Naive thymus-derived CD4-positive, alpha-beta T cell (primary cell): ENCODE measurements at regions of chr19 and their contacts with region 1.

Region 1: GRCh38 chr19:40285353-40286234 is 449 bp upstream of the AKT2 start:
- DNase-seq: peak; percentile 84 to 100 (median 99)
- ATAC-seq: peak; percentile 89
- H3K4me3 ChIP-seq: peak overlapping the region; percentile 81
- H3K4me3 Mint-ChIP-seq: peak overlapping the region; percentile 84 to 97 (median 92)
- H3K27ac ChIP-seq: peak overlapping the region; percentile 97
- H3K27ac Mint-ChIP-seq: peak overlapping the region; percentile 96 to 100 (median 99)
- H3K4me1 ChIP-seq: peaks cover 13 to 38% of the 10 kb centered on the region in 2 donors
- H3K4me1 Mint-ChIP-seq: peaks cover 24 to 59% (median 49%) of the 10 kb centered on the region in 7 donors
- H3K27me3 ChIP-seq: no peaks in the 10 kb centered on the region
- H3K27me3 Mint-ChIP-seq: peaks cover 0 to 2% (median 0%) of the 10 kb centered on the region in 5 donors

Region 2: DNA sequence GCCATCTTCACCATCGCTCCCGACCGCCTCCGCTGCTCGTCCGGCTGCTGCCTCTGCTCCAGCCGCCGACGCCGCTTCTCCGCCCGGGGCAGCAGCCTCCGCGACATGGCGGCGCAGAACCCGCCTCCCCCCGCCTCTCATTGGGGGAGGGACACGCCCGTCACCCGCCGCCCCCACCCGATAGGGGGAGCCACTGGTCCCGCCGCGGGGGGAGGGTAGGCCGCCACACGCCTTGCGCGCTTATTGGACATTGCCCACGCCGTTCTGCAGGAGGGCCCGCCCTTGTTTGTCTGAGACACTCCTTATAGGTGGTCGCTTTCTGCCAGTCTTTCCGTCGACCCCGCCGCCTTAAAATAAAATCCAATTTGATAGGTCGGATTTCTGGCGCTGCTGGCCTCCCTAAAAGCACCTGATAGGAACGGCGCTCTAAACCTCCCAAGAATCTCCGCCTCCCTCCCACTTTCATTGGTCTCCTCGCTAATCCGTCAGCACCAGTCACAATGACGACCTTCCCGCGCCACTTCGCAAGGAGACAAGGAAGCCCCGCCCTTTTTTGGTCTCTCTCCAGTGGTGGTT is 1435.6 kb before region 1 on chr19 and contains the start of gene HNRNPL:
- CTCF ChIA-PET with region 1: no interaction called
- POLR2A ChIA-PET with region 1: no interaction called
- intact Hi-C with region 1: loop called in 1 of 2 experiments (anchors 5 kb)
- DNase-seq: peak; percentile 99 to 100 (median 100)
- ATAC-seq: peak; percentile 78
- H3K4me3 ChIP-seq: peak within 1 kb of the TSS; percentile 81
- H3K4me3 Mint-ChIP-seq: peak within 1 kb of the TSS; percentile 88 to 99 (median 96)
- H3K27ac ChIP-seq: peak within 1 kb of the TSS; percentile 96
- H3K27ac Mint-ChIP-seq: peak within 1 kb of the TSS; percentile 94 to 100 (median 99)
- H3K4me1 ChIP-seq: peaks cover 24 to 41% of the 10 kb centered on the region in 2 donors
- H3K4me1 Mint-ChIP-seq: peaks cover 30 to 67% (median 50%) of the 10 kb centered on the region in 7 donors
- H3K27me3 ChIP-seq: no peaks in the 10 kb centered on the region
- H3K27me3 Mint-ChIP-seq: peaks cover 0 to 5% (median 0%) of the 10 kb centered on the region in 5 donors
- total RNA-seq, gene HNRNPL: 339 to 539 (median 505) TPM

Region 3: DNA sequence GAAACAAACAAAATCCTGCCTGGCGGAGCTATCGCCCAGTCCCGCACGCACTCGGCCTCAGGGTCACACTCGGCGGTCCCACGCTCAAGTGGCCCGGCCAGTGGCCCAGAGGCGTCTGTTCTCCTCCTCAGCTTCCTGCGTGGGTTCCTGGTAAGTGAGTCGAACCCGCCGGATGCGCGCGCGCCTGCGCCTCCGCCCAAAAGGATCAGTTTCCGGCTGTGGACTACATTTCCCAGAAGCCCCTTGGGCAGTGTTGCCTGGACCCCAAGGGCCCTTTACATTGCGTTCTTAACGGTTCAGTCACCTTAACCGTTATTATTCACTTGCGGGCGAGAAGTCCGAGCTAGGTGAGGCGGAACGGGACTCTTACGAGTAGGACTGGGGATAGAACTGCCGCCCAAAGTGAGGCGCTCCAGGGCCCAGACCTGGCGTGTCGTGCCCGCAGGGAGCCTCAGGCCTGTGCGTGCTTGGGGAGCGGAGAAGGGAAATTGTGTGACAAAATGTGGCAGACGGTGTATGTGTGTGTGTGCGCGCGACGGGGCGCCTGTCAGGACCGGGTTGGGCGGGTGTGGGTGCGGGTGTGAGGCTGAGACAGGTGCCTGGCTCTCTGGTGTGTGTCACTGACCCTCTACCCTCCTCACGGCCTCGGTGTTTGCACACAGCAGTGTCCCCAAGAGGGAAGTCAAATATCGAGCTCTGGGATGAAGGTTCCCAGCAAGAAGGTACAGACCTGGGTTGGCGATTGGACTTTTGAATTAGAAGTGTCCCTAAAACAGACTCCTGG is 288.6 kb before region 1 on chr19 and contains the start of gene ZNF546:
- CTCF ChIA-PET with region 1: no interaction called
- POLR2A ChIA-PET with region 1: no interaction called
- intact Hi-C with region 1: loop called in 1 of 2 experiments (anchors 2 kb)
- DNase-seq: peak; percentile 67 to 91 (median 90)
- ATAC-seq: peak; percentile 96
- H3K4me3 ChIP-seq: peak within 1 kb of the TSS; percentile 91
- H3K4me3 Mint-ChIP-seq: peak within 1 kb of the TSS; percentile 87 to 100 (median 95)
- H3K27ac ChIP-seq: peak within 1 kb of the TSS; percentile 85
- H3K27ac Mint-ChIP-seq: peak within 1 kb of the TSS; percentile 84 to 100 (median 95)
- H3K4me1 ChIP-seq: peaks cover 10 to 13% of the 10 kb centered on the region in 2 donors
- H3K4me1 Mint-ChIP-seq: peaks cover 20 to 56% (median 41%) of the 10 kb centered on the region in 7 donors
- H3K27me3 ChIP-seq: no peaks in the 10 kb centered on the region
- H3K27me3 Mint-ChIP-seq: no peaks in the 10 kb centered on the region
- total RNA-seq, gene ZNF546: 4.7 to 24.8 (median 7.5) TPM

Region 4: DNA sequence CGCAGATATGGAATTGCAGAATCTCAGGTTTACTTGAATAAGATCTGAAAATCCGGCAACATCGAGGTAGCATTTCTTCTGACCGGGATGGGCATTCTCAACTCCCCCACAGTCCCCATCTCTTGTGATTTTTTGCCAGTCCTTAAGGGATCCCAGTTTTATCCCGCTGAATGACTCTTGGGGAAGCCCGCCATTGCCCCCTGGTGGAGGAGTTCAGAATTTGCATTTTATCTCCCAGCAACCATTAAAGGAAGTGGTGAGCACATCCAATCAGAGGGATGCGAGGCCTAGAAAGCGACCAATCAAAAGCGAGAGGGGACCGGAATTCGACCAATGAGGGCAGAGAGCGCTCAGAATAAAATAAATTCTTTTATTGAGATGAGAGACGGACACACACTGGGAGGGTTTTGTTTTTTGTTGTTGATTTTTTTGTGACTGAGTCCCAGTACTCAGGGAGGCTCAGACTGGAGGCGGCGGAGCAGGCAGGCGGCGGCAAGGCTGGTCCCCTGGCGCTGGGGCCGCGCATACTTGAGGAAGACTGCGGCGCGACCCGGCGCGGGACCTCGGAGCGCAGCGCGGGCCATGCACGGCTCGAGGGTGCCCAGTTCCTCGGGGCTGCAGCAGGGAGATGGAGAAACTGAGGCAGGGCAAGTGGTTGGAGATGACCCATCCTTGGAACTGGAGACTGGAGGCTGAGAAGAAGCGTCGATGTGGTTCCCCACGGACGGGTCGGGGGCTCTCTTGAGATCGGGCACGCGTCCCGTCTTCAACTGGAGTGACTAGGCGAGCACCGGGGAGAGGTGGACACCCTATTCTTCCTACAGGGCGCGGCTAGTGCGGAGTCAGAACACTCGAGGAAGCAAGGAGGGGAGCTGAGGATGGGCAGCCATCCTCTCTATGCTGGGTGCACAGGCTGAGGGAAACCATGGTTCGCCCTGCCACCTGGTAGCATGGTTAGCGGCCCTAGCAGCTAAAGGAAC is 63.4 kb before region 1 on chr19:
- CTCF ChIA-PET with region 1: interaction called, 3 read pairs
- POLR2A ChIA-PET with region 1: no interaction called
- intact Hi-C with region 1: loop called in 1 of 2 experiments (anchors 2 kb)
- DNase-seq: peak; percentile 54 to 86 (median 82)
- ATAC-seq: peak; percentile 92
- H3K4me3 ChIP-seq: no peak overlapping the region
- H3K4me3 Mint-ChIP-seq: peak overlapping the region; percentile 16 to 85 (median 68)
- H3K27ac ChIP-seq: no peak overlapping the region
- H3K27ac Mint-ChIP-seq: peak overlapping the region; percentile 5 to 85 (median 58)
- H3K4me1 ChIP-seq: peaks cover 4 to 20% of the 10 kb centered on the region in 2 donors
- H3K4me1 Mint-ChIP-seq: peaks cover 12 to 30% (median 24%) of the 10 kb centered on the region in 7 donors
- H3K27me3 ChIP-seq: peaks cover 16 to 35% of the 10 kb centered on the region in 2 donors
- H3K27me3 Mint-ChIP-seq: peaks cover 49 to 70% (median 60%) of the 10 kb centered on the region in 5 donors

Region 5: GRCh38 chr19:40348125-40348913 is 62.7 kb after region 1 on chr19 and contains the starts of genes C19orf47 and PLD3:
- CTCF ChIA-PET with region 1: no interaction called
- POLR2A ChIA-PET with region 1: interaction called, 5 read pairs
- intact Hi-C with region 1: loop called (anchors 1 kb)
- DNase-seq: peak; percentile 92 to 99 (median 97)
- ATAC-seq: peak; percentile 97
- H3K4me3 ChIP-seq: peak within 1 kb of the TSS; percentile 61
- H3K4me3 Mint-ChIP-seq: peak within 1 kb of the TSS; percentile 83 to 99 (median 96)
- H3K27ac ChIP-seq: peak within 1 kb of the TSS; percentile 86
- H3K27ac Mint-ChIP-seq: peak within 1 kb of the TSS; percentile 81 to 98 (median 93)
- H3K4me1 ChIP-seq: peaks cover 7 to 14% of the 10 kb centered on the region in 2 donors
- H3K4me1 Mint-ChIP-seq: peaks cover 20 to 51% (median 44%) of the 10 kb centered on the region in 7 donors
- H3K27me3 ChIP-seq: no peaks in the 10 kb centered on the region
- H3K27me3 Mint-ChIP-seq: peaks cover 0 to 2% (median 0%) of the 10 kb centered on the region in 5 donors
- total RNA-seq, gene C19orf47: 12.6 to 20.3 (median 15.8) TPM
- total RNA-seq, gene PLD3: 75.4 to 137 (median 114) TPM

Region 6: GRCh38 chr19:40465557-40466150 is 180.1 kb after region 1 on chr19 and contains the start of gene BLVRB:
- CTCF ChIA-PET with region 1: no interaction called
- POLR2A ChIA-PET with region 1: no interaction called
- intact Hi-C with region 1: loop called in 1 of 2 experiments (anchors 1 kb)
- DNase-seq: peak; percentile 98 to 100 (median 99)
- ATAC-seq: peak; percentile 90
- H3K4me3 ChIP-seq: peak within 1 kb of the TSS; percentile 44
- H3K4me3 Mint-ChIP-seq: peak within 1 kb of the TSS; percentile 83 to 95 (median 86)
- H3K27ac ChIP-seq: peak within 1 kb of the TSS; percentile 66
- H3K27ac Mint-ChIP-seq: peak within 1 kb of the TSS; percentile 70 to 94 (median 87)
- H3K4me1 ChIP-seq: peaks cover 0 to 7% of the 10 kb centered on the region in 2 donors
- H3K4me1 Mint-ChIP-seq: peaks cover 18 to 27% (median 25%) of the 10 kb centered on the region in 7 donors
- H3K27me3 ChIP-seq: peaks cover 3 to 4% of the 10 kb centered on the region in 2 donors
- H3K27me3 Mint-ChIP-seq: peaks cover 6 to 28% (median 7%) of the 10 kb centered on the region in 5 donors
- total RNA-seq, gene BLVRB: 11.0 to 42.2 (median 13.3) TPM

Region 7: DNA sequence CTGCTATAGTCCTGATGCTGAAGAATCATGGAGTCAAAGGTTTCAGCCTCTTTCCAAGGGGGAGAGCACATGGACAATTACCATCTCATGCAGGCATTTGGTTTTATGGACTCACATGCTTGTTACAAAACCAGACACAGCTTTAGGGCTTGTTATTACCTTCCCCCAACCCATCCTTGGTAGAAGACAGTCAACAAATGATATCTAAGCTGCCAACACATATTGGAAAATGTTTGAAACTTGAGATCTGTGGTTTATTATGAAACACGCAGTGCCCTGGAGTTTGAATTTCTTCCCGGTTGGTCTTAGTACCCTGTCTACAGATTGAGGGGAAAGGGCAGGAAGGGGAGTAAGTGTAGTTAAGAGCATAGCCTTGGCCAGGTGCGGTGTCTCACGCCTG is 577.2 kb after region 1 on chr19:
- CTCF ChIA-PET with region 1: no interaction called
- POLR2A ChIA-PET with region 1: no interaction called
- intact Hi-C with region 1: no loop called
- DNase-seq: no peak
- ATAC-seq: no peak
- H3K4me3 ChIP-seq: no peak overlapping the region
- H3K4me3 Mint-ChIP-seq: no peak overlapping the region
- H3K27ac ChIP-seq: no peak overlapping the region
- H3K27ac Mint-ChIP-seq: no peak overlapping the region
- H3K4me1 ChIP-seq: no peaks in the 10 kb centered on the region
- H3K4me1 Mint-ChIP-seq: peaks cover 0 to 3% (median 0%) of the 10 kb centered on the region in 7 donors
- H3K27me3 ChIP-seq: no peaks in the 10 kb centered on the region
- H3K27me3 Mint-ChIP-seq: peaks cover 0 to 26% (median 4%) of the 10 kb centered on the region in 5 donors